CD4-positive, alpha-beta T cell (primary cell): ENCODE measurements at regions of chr10 and their contacts with region 1.

Region 1: GRCh38 chr10:97463363-97464132 is 17.6 kb downstream of the ZDHHC16 start:
- DNase-seq: peak in 10 of 14 experiments; percentile 12 to 71 (median 22)
- ATAC-seq: peak; percentile 89
- H3K4me3 ChIP-seq: no peak overlapping the region
- H3K4me3 Mint-ChIP-seq: no peak overlapping the region
- H3K27ac ChIP-seq: no peak overlapping the region
- H3K27ac Mint-ChIP-seq: peak overlapping the region; percentile 56
- H3K4me1 ChIP-seq: no peaks in the 10 kb centered on the region
- H3K4me1 Mint-ChIP-seq: no peaks in the 10 kb centered on the region
- H3K27me3 ChIP-seq: no peaks in the 10 kb centered on the region
- H3K27me3 Mint-ChIP-seq: no peaks in the 10 kb centered on the region
- CTCF ChIP-seq: peak; percentile 83

Region 2: GRCh38 chr10:97427525-97428179 is 35.9 kb before region 1 on chr10:
- CTCF ChIA-PET with region 1: no interaction called
- POLR2A ChIA-PET with region 1: no interaction called
- intact Hi-C with region 1: no loop called
- DNase-seq: peak in 3 of 14 experiments; percentile 50 to 60 (median 53)
- ATAC-seq: no peak
- H3K4me3 ChIP-seq: peak overlapping the region; percentile 78
- H3K4me3 Mint-ChIP-seq: peak overlapping the region; percentile 95
- H3K27ac ChIP-seq: peak overlapping the region; percentile 24 to 73
- H3K27ac Mint-ChIP-seq: peak overlapping the region; percentile 89
- H3K4me1 ChIP-seq: peaks cover 43% of the 10 kb centered on the region
- H3K4me1 Mint-ChIP-seq: peaks cover 46% of the 10 kb centered on the region
- H3K27me3 ChIP-seq: no peaks in the 10 kb centered on the region
- H3K27me3 Mint-ChIP-seq: no peaks in the 10 kb centered on the region
- CTCF ChIP-seq: no peak

Region 3: GRCh38 chr10:97553575-97554031 is 90.1 kb after region 1 on chr10:
- CTCF ChIA-PET with region 1: interaction called, 6 read pairs
- POLR2A ChIA-PET with region 1: interaction called, 5 read pairs
- intact Hi-C with region 1: loop called (anchors 1 kb)
- DNase-seq: peak; percentile 30 to 75 (median 54)
- ATAC-seq: peak; percentile 94
- H3K4me3 ChIP-seq: no peak overlapping the region
- H3K4me3 Mint-ChIP-seq: no peak overlapping the region
- H3K27ac ChIP-seq: no peak overlapping the region
- H3K27ac Mint-ChIP-seq: no peak overlapping the region
- H3K4me1 ChIP-seq: peaks cover 4% of the 10 kb centered on the region
- H3K4me1 Mint-ChIP-seq: no peaks in the 10 kb centered on the region
- H3K27me3 ChIP-seq: no peaks in the 10 kb centered on the region
- H3K27me3 Mint-ChIP-seq: no peaks in the 10 kb centered on the region
- CTCF ChIP-seq: peak; percentile 83